WTC11 (cell line): ENCODE measurements at regions of chr3 and their contacts with region 1.

Region 1: DNA sequence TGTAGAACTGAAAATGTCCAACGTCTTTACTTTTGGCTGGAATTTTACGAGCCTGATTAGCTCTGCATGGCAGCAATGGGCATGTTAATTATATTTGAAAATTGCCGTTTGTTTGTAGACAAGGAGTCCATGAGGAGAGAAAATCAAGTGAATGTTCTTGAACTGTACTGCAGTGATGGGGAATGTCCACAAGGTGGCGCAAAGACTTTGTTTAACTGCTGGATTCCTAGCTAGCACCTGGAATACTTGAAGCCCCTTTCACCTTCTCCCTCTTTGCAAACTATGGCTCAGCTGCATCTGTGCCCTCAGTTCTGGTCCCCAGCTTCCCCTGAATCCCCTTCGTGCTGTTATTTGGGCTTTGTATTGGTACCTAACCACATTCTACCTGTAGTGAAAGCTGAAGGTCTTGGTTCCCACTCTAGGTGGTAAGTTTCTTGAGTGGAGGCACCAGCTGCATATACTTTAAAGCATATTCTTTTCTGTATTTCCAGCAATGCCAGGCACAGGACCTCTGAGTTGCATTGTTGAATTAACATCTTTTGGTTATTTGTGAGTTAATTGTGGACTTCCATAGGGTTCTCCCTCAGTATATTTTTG is 25.3 kb downstream of the EXOG start:
- DNase-seq: peak; percentile 83
- ATAC-seq: peak; percentile 75
- H3K4me3 Mint-ChIP-seq: no peak overlapping the region
- H3K27ac Mint-ChIP-seq: no peak overlapping the region; the same call in 1 of the 2 replicates
- H3K4me1 Mint-ChIP-seq: peaks cover 36% of the 10 kb centered on the region
- H3K27me3 Mint-ChIP-seq: no peaks in the 10 kb centered on the region
- CTCF ChIP-seq: peak; percentile 89

Region 2: GRCh38 chr3:38036906-38037305 is 484.6 kb before region 1 on chr3:
- CTCF ChIA-PET with region 1: no interaction called
- POLR2A ChIA-PET with region 1: no interaction called
- DNase-seq: no peak
- ATAC-seq: peak; percentile 49
- H3K4me3 Mint-ChIP-seq: no peak overlapping the region
- H3K27ac Mint-ChIP-seq: no peak overlapping the region
- H3K4me1 Mint-ChIP-seq: peaks cover 18% of the 10 kb centered on the region
- H3K27me3 Mint-ChIP-seq: peaks cover 51% of the 10 kb centered on the region
- CTCF ChIP-seq: no peak

Region 3: DNA sequence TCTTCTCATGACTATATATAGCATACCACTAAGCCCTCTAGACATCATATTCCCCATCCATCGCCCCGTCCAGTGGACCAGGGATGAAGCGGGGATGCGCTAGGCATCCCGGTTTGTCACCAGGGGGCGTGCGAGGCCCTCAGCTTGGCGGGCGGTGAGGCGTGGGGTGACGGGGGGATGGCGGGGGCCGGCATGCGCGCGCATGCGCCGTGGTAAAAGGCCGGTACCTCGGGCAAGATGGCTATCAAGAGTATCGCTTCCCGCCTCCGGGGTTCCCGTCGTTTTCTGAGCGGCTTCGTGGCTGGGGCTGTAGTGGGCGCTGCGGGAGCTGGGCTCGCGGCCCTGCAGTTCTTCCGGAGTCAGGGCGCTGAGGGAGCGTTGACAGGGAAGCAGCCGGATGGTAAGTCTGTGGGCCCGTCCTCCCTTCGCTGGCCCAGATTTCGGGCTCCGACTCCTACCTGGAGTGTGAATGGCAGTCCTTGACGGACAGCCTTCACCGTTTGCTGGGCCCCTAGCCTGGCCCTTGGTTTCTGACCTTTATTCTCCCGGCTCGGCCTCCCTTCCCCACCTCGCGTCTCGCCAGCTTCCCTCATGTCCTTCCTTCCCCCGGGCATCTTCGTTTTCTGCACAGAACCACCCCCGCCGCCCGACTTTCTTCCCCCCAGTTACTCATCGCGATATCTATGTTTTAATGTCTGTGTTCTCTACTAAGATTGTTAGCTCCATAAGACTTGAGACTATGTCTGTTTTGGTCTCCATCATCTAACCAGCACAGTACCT is 25.2 kb before region 1 on chr3 and contains the start of gene EXOG:
- CTCF ChIA-PET with region 1: interaction called, 30 read pairs
- POLR2A ChIA-PET with region 1: no interaction called
- DNase-seq: peak; percentile 96
- ATAC-seq: peak; percentile 93
- H3K4me3 Mint-ChIP-seq: peak within 1 kb of the TSS; percentile 93
- H3K27ac Mint-ChIP-seq: peak within 1 kb of the TSS; percentile 68
- H3K4me1 Mint-ChIP-seq: peaks cover 5% of the 10 kb centered on the region
- H3K27me3 Mint-ChIP-seq: no peaks in the 10 kb centered on the region
- CTCF ChIP-seq: peak; percentile 71
- total RNA-seq, gene EXOG: 12.2 to 13.7 TPM (median 12.9 TPM) in 3 replicates

Region 4: GRCh38 chr3:38536686-38537085 is 15.2 kb after region 1 on chr3:
- CTCF ChIA-PET with region 1: interaction called, 10 read pairs
- POLR2A ChIA-PET with region 1: no interaction called
- DNase-seq: no peak
- ATAC-seq: peak; percentile 71
- H3K4me3 Mint-ChIP-seq: no peak overlapping the region
- H3K27ac Mint-ChIP-seq: no peak overlapping the region; the same call in 1 of the 2 replicates
- H3K4me1 Mint-ChIP-seq: peaks cover 27% of the 10 kb centered on the region
- H3K27me3 Mint-ChIP-seq: peaks cover 3% of the 10 kb centered on the region; the same call in 1 of the 2 replicates
- CTCF ChIP-seq: no peak

Region 5: GRCh38 chr3:38627956-38628355 is 106.5 kb after region 1 on chr3:
- CTCF ChIA-PET with region 1: interaction called, 69 read pairs
- POLR2A ChIA-PET with region 1: no interaction called
- DNase-seq: peak; percentile 87
- ATAC-seq: peak; percentile 86
- H3K4me3 Mint-ChIP-seq: no peak overlapping the region
- H3K27ac Mint-ChIP-seq: no peak overlapping the region
- H3K4me1 Mint-ChIP-seq: peaks cover 14% of the 10 kb centered on the region
- H3K27me3 Mint-ChIP-seq: no peaks in the 10 kb centered on the region; the same call in 1 of the 2 replicates
- CTCF ChIP-seq: peak; percentile 51

Region 6: DNA sequence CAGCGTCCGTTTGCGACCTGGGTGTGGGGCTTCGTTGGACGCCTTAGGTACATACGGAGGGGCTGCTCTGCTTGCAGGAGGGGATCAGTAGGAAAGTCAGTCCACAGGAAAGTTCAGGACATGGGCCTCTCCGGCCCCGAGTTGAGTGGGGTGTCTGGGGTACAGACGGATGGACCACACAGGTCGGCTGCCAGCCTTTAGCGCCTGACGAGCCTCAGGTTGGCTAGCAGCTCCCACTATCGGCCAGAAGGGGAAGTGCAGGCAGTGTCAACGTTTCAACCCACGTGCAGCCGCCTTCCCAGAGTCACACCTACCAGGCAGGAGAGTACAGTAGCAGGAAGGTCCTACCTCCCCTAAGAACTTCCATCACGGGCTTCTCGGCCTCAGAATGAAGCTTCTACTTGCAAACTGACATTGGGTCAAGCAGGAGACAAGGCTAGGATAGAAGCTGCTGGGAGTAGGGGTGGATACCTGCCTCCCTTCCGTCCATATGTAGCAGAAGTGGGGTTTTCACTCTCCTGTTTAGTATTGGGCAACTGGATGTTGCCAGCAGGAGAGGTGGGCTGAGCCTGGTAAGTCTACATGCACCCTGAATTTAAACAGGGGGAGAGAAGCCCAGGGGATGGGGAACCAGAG is 129.8 kb after region 1 on chr3:
- CTCF ChIA-PET with region 1: interaction called, 198 read pairs
- POLR2A ChIA-PET with region 1: no interaction called
- DNase-seq: peak; percentile 83
- ATAC-seq: peak; percentile 43
- H3K4me3 Mint-ChIP-seq: no peak overlapping the region
- H3K27ac Mint-ChIP-seq: no peak overlapping the region
- H3K4me1 Mint-ChIP-seq: peaks cover 10% of the 10 kb centered on the region
- H3K27me3 Mint-ChIP-seq: peaks cover 15% of the 10 kb centered on the region
- CTCF ChIP-seq: peak; percentile 98